ENCODE measurements at regions of chr1 and their contacts with region 1.

Region 1: GRCh38 chr1:118716782-118717181 is 271.4 kb downstream of the TBX15 start:
- DNase-seq: no peak
- H3K4me3 ChIP-seq: no peak overlapping the region
- H3K27ac ChIP-seq: no peak overlapping the region
- H3K4me1 ChIP-seq: no peaks in the 10 kb centered on the region
- H3K27me3 ChIP-seq: peaks cover 0 to 1% (median 0%) of the 10 kb centered on the region in 4 experiments; a peak in 1 of 7 replicates
- CTCF ChIP-seq: peak in 2 of 3 experiments; percentile 24 to 32; a peak in 2 of 4 replicates
- EP300 ChIP-seq: no peak
- POLR2A ChIP-seq: no peak
- RAD21 ChIP-seq: peak; percentile 56 to 59

Region 2: GRCh38 chr1:118223426-118223825 is 493.4 kb before region 1 on chr1:
- CTCF ChIA-PET with region 1: interaction called, 10 read pairs
- POLR2A ChIA-PET with region 1: no interaction called
- DNase-seq: peak; percentile 5 to 57
- H3K4me3 ChIP-seq: no peak overlapping the region
- H3K27ac ChIP-seq: no peak overlapping the region
- H3K4me1 ChIP-seq: no peaks in the 10 kb centered on the region
- H3K27me3 ChIP-seq: no peaks in the 10 kb centered on the region
- CTCF ChIP-seq: peak in 2 of 3 experiments; percentile 70 to 73; a peak in 3 of 4 replicates
- EP300 ChIP-seq: no peak
- POLR2A ChIP-seq: no peak
- RAD21 ChIP-seq: peak; percentile 92 to 93

Region 3: GRCh38 chr1:118739421-118739970 is 22.7 kb after region 1 on chr1:
- CTCF ChIA-PET with region 1: no interaction called
- POLR2A ChIA-PET with region 1: no interaction called
- DNase-seq: peak in 1 of 2 experiments; percentile 47
- H3K4me3 ChIP-seq: no peak overlapping the region; a peak in 1 of 8 replicates
- H3K27ac ChIP-seq: no peak overlapping the region
- H3K4me1 ChIP-seq: peaks cover 0 to 6% (median 5%) of the 10 kb centered on the region in 4 experiments; a peak in 3 of 7 replicates
- H3K27me3 ChIP-seq: no peaks in the 10 kb centered on the region
- CTCF ChIP-seq: no peak
- EP300 ChIP-seq: no peak
- POLR2A ChIP-seq: no peak
- RAD21 ChIP-seq: no peak